ENCODE measurements at regions of chr10 and their contacts with region 1.

Region 1: GRCh38 chr10:94320285-94320914 is 42.3 kb downstream of the NOC3L start:
- DNase-seq: peak; percentile 57 to 79 (median 70)
- ATAC-seq: peak in 1 of 2 donors; percentile 52
- H3K4me3 ChIP-seq: no peak overlapping the region
- H3K27ac ChIP-seq: no peak overlapping the region
- H3K4me1 ChIP-seq: no peaks in the 10 kb centered on the region
- H3K27me3 ChIP-seq: no peaks in the 10 kb centered on the region

Region 2: DNA sequence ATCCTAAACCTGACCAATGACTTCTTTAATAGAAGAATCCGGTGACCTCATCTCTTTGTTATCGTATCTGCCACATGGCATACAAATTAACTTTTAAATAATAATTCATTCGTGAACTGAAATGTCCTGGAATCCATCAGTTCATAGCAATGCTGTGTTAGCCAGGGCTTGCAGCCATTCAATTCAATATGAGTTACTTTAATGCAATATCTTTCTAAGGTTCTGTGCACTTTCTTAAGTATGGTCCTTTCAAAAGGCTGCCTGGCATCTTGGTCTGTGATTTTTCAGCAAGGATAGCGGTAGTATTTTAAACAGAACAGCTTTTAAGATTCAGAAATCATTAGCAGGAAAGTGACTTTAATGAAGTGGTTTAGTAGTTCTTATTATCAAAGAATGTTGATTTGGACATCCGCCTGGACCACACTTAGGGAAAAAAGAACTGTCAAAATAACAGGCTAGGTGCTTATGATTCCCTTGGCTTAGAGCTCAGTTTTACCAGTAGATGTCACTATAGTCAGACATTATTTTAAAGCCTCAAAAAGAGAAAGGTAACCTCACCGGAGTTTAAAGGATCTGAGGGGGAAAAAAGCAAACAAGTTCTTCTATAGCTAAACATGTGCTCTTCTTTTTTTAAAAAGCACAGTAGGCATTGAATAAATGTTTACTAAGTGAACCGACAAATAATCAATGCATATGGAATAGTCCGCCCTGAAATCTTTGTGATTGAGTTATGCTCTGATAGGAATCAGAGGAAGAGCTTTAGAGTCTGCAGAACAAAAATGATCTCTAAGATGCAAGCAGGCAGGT is 403.9 kb before region 1 on chr10:
- intact Hi-C with region 1: loop called (anchors 2 to 10 kb)
- DNase-seq: no peak
- ATAC-seq: peak; percentile 76 to 79
- H3K4me3 ChIP-seq: no peak overlapping the region
- H3K27ac ChIP-seq: no peak overlapping the region
- H3K4me1 ChIP-seq: no peaks in the 10 kb centered on the region
- H3K27me3 ChIP-seq: no peaks in the 10 kb centered on the region

Region 3: GRCh38 chr10:94225589-94225988 is 94.8 kb before region 1 on chr10:
- intact Hi-C with region 1: no loop called
- DNase-seq: no peak
- ATAC-seq: peak; percentile 46 to 50
- H3K4me3 ChIP-seq: no peak overlapping the region
- H3K27ac ChIP-seq: no peak overlapping the region
- H3K4me1 ChIP-seq: peaks cover 6% of the 10 kb centered on the region
- H3K27me3 ChIP-seq: no peaks in the 10 kb centered on the region

Measured in right cardiac atrium (tissue), 5 donors.